ENCODE measurements at regions of chr22 and their contacts with region 1.

Region 1: DNA sequence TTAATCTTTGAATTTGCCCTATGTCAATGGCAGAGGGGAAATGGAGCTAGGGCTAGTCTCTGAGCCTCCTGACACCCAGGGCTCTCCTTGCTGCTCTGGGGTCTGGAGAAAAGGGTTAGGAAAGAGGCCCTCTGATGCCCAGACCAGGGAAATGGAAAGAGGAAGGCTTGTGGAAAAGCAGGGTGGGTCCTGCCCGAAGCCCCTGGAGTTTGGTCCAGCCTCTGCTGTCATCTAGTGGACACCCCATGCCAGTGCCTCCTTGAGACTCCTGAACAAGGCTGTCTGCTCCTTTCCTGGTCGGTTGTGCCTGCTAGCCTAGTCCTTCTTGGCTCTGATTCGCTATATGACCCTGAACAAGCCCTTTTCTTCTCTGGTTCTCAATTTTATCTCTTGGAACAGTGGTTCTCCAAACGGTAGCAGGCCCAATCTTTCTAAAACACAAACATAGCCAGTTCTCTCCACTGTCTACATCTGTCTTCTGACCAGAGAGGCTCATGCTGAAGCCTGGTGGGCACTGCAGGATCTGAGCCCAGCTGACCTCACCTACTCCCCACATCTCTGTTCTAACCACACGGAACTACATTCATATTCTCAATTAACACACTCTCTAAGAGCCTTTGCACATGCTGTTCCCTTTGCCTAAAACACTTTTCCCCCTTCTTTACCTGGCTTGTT is 8.8 kb upstream of the PLA2G3 start:
- DNase-seq: peak; percentile 81 to 82
- H3K4me3 ChIP-seq: no peak overlapping the region
- H3K4me3 Mint-ChIP-seq: no peak overlapping the region
- H3K27ac Mint-ChIP-seq: no peak overlapping the region
- H3K4me1 ChIP-seq: no peaks in the 10 kb centered on the region
- H3K4me1 Mint-ChIP-seq: no peaks in the 10 kb centered on the region
- H3K27me3 ChIP-seq: no peaks in the 10 kb centered on the region
- H3K27me3 Mint-ChIP-seq: no peaks in the 10 kb centered on the region
- CTCF ChIP-seq: peak; percentile 93 to 97

Region 2: DNA sequence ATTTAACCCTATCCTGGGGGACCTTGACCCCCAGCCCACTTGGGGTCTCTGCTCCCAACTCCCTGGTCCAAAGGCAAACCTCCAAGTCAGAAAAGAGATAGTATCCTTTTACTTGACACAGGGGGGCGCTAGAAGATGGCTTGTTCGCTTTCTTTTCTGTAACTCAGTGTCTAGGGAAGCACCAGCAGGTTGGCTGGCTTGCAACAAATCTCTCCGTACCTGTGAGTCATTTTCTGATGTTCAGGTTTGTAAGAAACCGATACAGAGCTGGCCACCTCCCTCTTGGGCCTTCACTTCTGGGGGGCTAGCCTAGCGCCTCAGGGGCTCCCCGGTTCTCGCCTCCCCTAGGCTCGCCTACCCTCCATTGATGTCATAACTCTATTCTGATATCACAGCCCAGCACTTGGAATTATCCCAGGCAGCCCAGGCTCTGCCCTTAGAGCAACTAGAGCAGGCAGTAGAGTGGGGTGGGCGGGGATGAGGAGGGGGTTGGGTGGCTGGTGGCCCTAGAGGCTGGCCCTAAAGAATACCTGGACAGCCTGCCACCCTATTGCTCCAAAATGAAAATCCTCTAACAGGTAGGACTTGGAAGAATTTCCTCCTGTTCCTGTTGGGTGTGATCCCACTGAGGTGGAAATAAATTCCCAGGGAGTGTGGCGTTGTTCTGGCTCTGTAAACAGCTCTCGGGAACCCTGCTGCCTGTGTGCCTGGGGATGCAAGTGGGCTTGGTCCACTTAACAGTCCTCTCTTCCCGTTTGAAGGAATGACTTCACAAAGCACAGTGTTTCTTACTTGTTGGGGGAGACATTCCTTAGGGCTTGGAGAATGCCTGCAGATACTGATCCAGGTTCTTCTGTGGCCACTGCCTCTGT is 385.0 kb before region 1 on chr22:
- CTCF ChIA-PET with region 1: no interaction called
- POLR2A ChIA-PET with region 1: no interaction called
- intact Hi-C with region 1: loop called (anchors 10 kb)
- DNase-seq: peak; percentile 76 to 78
- H3K4me3 ChIP-seq: no peak overlapping the region
- H3K4me3 Mint-ChIP-seq: no peak overlapping the region
- H3K27ac Mint-ChIP-seq: no peak overlapping the region
- H3K4me1 ChIP-seq: no peaks in the 10 kb centered on the region
- H3K4me1 Mint-ChIP-seq: no peaks in the 10 kb centered on the region
- H3K27me3 ChIP-seq: no peaks in the 10 kb centered on the region
- H3K27me3 Mint-ChIP-seq: no peaks in the 10 kb centered on the region
- CTCF ChIP-seq: peak; percentile 64 to 68

Region 3: DNA sequence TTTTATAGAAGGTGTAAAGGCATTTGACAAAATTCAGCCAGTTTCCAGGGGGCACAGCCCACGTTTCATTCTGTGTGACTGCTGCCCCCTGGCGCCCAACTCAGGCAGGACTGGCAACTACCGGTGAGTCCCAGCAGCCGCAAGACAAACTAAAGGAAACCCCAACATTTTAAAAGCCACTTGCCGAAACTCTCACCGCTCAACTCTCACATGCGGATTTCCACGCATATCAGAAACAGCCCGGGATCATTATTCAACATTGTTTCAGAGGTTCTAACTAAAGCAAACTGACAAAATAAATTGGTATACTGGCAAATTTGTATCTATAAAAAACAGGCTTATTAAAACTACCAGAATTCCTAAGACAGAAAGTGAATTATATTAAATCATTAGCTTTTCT is 228.7 kb before region 1 on chr22:
- CTCF ChIA-PET with region 1: no interaction called
- POLR2A ChIA-PET with region 1: no interaction called
- intact Hi-C with region 1: loop called (anchors 5 kb)
- DNase-seq: peak; percentile 73 to 84
- H3K4me3 ChIP-seq: peak overlapping the region; percentile 49
- H3K4me3 Mint-ChIP-seq: peak overlapping the region; percentile 60
- H3K27ac Mint-ChIP-seq: no peak overlapping the region
- H3K4me1 ChIP-seq: no peaks in the 10 kb centered on the region
- H3K4me1 Mint-ChIP-seq: peaks cover 5% of the 10 kb centered on the region
- H3K27me3 ChIP-seq: no peaks in the 10 kb centered on the region
- H3K27me3 Mint-ChIP-seq: no peaks in the 10 kb centered on the region
- CTCF ChIP-seq: peak; percentile 91 to 93

Region 4: GRCh38 chr22:30947816-30948454 is 201.2 kb before region 1 on chr22:
- CTCF ChIA-PET with region 1: interaction called, 3 read pairs
- POLR2A ChIA-PET with region 1: no interaction called
- intact Hi-C with region 1: loop called (anchors 1 kb)
- DNase-seq: peak in 1 of 2 experiments; percentile 20
- H3K4me3 ChIP-seq: no peak overlapping the region
- H3K4me3 Mint-ChIP-seq: no peak overlapping the region
- H3K27ac Mint-ChIP-seq: no peak overlapping the region
- H3K4me1 ChIP-seq: no peaks in the 10 kb centered on the region
- H3K4me1 Mint-ChIP-seq: no peaks in the 10 kb centered on the region
- H3K27me3 ChIP-seq: no peaks in the 10 kb centered on the region
- H3K27me3 Mint-ChIP-seq: no peaks in the 10 kb centered on the region
- CTCF ChIP-seq: peak; percentile 34 to 52

Region 5: DNA sequence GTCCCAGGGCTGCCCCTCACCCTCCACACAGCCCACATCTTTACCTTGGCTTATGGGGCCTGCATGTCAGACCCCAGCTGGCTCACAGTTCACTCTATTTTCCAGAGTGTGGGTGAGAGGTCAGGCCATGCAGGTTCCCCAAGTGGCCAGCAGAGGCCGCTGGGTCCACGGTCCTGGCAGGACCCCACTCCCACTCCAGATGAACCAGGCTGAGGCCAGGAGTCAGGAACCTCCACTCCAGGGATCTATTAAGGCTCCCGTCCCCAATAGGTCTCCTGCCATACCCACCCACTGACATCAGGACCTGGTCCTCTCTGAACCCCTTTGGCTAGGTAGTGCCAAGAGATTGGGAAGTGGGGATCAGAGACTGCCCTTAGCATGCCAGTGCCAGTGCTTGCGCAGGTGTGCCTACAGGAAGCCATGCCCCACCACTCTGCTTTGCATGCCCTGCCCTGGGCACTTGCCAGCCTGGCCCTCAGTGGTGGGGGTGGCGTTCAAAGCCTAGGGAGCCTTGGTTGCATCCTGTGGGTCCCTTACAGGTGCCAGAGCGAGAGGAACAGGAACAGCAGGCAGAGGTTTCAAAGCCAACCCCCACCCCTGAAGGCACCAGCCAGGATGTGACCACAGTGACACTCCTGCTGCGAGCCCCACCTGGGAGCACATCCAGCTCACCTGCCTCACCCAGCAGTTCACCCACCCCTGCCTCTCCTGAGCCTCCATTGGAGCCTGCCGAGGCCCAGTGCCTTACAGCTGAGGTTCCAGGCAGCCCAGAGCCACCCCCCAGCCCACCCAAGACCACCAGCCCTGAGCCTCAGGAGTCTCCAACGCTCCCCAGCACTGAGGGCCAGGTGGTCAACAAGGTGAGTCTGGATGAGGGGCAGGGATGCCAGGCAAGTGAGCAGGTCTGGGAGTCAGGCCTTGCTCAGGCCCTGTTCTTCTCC is 59.7 kb before region 1 on chr22:
- CTCF ChIA-PET with region 1: no interaction called
- POLR2A ChIA-PET with region 1: no interaction called
- intact Hi-C with region 1: loop called (anchors 1 kb)
- DNase-seq: peak in 1 of 2 experiments; percentile 54
- H3K4me3 ChIP-seq: no peak overlapping the region
- H3K4me3 Mint-ChIP-seq: no peak overlapping the region
- H3K27ac Mint-ChIP-seq: peak overlapping the region; percentile 43
- H3K4me1 ChIP-seq: no peaks in the 10 kb centered on the region
- H3K4me1 Mint-ChIP-seq: no peaks in the 10 kb centered on the region
- H3K27me3 ChIP-seq: no peaks in the 10 kb centered on the region
- H3K27me3 Mint-ChIP-seq: no peaks in the 10 kb centered on the region
- CTCF ChIP-seq: peak; percentile 47 to 72

Region 6: DNA sequence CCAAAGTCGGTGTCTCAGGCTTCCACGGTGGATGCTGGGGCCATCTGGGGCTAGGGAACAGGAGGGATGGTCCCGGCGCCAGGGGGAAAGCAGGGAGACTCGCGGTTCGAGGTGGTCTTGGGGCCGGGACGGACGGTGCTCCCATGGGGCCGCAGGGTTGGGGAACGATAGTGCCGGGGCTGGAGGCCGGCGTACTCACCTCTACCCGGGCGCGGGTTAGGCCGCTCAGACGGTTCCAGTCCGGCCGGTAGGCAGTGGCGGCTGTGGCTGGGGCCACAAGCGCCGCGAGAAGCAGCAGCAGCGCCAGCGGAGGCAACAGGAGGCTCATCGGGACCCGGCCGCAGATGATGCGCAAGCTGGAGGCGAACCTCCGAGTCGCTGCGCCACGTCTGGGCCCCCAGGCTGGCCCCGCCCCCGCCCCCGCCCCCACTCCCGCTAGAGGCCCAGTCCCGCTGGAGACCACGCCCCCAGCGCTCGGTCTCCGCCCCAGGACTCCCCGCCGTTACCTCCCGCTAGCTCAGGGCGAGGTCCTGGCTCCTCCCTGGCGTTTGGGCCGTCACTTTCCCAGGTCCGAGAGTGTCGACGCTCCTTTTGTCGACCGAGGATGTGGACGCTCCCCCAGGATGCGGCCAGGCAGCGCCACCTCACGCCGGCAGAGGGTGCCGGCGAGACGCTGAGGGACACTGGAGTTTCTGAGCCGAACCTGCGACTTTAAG is 41.8 kb before region 1 on chr22 and contains the start of gene SELENOM:
- CTCF ChIA-PET with region 1: interaction called, 10 read pairs
- POLR2A ChIA-PET with region 1: no interaction called
- intact Hi-C with region 1: loop called (anchors 1 kb)
- DNase-seq: peak; percentile 86 to 91
- H3K4me3 ChIP-seq: peak within 1 kb of the TSS; percentile 33
- H3K4me3 Mint-ChIP-seq: peak within 1 kb of the TSS; percentile 79
- H3K27ac Mint-ChIP-seq: peak within 1 kb of the TSS; percentile 49
- H3K4me1 ChIP-seq: no peaks in the 10 kb centered on the region
- H3K4me1 Mint-ChIP-seq: peaks cover 7% of the 10 kb centered on the region
- H3K27me3 ChIP-seq: no peaks in the 10 kb centered on the region
- H3K27me3 Mint-ChIP-seq: no peaks in the 10 kb centered on the region
- CTCF ChIP-seq: peak; percentile 64 to 88
- total RNA-seq, gene SELENOM: 1.3 and 2.0 TPM in 2 replicates

Region 7: DNA sequence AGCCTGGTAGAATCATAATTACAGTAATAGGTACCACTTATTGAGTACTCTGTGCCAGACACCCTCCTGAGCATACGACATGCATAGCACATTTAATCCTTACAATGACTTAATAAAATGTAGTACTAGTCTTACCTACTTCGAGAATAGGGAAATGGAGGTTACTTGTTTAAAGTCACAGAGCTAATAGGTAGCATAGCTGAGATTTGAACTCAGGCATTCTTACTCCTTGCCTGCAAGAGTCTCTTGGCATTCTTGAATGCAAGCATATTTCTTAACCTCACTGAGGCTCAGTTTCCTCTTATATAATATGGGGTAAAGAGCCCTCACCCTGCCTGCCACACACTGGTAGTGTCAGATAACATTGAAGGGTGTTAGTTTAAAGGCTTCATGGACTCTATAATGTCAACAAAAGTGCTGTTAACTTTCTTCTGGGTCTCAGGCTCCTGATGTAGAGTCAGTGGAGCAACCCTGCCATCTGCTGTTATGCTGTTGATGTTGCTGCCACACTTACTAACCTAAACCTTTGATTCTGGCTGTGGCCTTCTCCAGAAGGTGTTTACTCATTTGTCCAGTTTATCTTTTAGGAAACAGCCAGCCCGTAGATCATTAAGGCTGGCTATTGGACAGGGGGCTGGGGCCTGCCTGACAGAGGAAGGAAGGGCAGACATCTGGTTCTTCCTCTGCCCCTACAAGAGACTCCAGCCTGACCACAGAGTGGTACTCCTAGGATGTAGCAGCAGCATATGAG is 82.0 kb after region 1 on chr22:
- CTCF ChIA-PET with region 1: interaction called, 3 read pairs
- POLR2A ChIA-PET with region 1: no interaction called
- intact Hi-C with region 1: loop called (anchors 1 kb)
- DNase-seq: peak; percentile 61 to 69
- H3K4me3 ChIP-seq: no peak overlapping the region
- H3K4me3 Mint-ChIP-seq: no peak overlapping the region
- H3K27ac Mint-ChIP-seq: no peak overlapping the region
- H3K4me1 ChIP-seq: peaks cover 32% of the 10 kb centered on the region
- H3K4me1 Mint-ChIP-seq: peaks cover 22% of the 10 kb centered on the region
- H3K27me3 ChIP-seq: no peaks in the 10 kb centered on the region
- H3K27me3 Mint-ChIP-seq: no peaks in the 10 kb centered on the region
- CTCF ChIP-seq: peak; percentile 75 to 85

Measured in Caco-2 (cell line).